ENCODE measurements at regions of chr15 and their contacts with region 1.

Region 1: DNA sequence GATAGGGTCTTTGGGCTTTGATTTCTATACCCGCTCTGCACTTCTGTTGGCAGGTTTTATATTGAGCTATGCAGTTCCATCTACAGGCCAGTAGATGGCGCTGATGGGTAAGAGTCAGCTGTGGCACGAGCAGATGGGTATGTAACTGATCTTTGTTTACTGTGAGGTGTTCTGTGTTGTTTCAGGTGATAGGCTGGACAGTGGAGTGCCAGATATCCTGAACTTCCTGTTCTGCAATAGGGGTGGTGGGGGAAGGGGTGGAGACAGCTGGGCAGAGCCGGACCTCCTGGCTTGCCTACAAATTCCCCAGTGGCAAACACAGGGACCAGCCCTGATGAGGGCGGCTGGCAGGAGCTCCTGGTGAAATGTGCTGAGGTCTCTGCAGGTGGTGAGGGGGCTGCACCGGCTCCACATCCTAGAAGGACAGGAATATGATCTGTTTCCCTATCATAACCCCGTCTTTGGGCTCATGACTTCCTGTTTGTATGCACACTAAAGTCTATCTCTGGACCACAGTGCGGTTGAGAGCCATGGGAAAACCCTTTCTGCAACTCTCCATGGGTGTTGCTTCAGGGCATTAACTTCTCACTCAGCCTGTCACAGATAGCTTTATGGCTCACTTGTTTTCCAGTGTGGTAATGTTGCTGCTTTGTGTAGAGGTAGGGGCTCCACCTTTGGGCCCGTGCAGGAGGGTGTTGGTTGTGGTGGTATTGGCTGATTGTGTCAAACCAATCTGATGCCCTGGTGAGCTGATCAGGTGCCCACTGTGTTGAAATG is 13.4 kb upstream of the FAM98B start:
- DNase-seq: peak; percentile 63
- ATAC-seq: peak; percentile 90
- H3K4me3 Mint-ChIP-seq: no peak overlapping the region
- H3K27ac Mint-ChIP-seq: peak overlapping the region; percentile 7
- H3K4me1 Mint-ChIP-seq: peaks cover 8% of the 10 kb centered on the region
- H3K27me3 Mint-ChIP-seq: peaks cover 44% of the 10 kb centered on the region

Region 2: DNA sequence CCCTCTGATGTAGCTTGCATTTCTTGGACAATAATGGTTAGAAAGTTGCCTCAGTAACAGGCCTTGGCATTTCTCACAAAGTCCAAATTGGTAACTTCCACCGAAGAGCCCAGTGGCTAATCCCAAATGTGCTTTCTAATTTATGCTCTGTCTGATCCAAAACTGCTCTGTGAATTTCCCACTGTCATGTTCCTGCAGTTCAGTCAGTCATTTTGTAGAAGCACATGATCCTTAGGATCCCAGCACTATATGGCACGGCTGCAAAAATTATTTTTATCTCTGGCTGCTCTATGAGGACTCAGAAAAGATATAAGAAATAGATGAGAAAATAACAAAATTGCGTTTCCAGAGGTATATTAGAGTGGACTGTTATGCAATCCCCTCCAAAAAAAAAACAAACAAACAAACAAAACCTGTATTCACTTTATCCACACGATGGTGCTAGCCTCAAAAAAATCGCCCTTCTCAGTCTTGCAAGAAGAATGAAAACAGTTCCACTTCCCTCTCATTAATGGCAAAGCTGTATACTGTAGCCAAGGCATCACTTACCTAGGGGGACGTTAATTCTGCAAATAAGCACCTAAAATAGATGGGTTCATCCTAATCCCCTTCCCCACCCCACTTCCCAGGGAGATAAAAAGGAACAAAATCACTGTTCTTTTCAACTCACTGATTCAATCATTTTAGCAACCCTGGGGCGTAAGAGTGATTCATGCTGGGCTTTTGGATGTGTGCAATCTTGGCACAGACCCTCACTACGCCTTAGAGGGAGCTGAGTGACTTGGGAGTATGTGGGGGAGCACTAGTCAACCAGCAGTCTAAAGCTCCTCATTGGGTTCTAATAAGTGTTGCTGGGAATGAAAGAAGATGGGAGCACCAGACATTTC is 444.8 kb before region 1 on chr15:
- CTCF ChIA-PET with region 1: no interaction called
- DNase-seq: no peak
- ATAC-seq: no peak
- H3K4me3 Mint-ChIP-seq: no peak overlapping the region
- H3K27ac Mint-ChIP-seq: no peak overlapping the region
- H3K4me1 Mint-ChIP-seq: no peaks in the 10 kb centered on the region
- H3K27me3 Mint-ChIP-seq: peaks cover 34% of the 10 kb centered on the region

Region 3: DNA sequence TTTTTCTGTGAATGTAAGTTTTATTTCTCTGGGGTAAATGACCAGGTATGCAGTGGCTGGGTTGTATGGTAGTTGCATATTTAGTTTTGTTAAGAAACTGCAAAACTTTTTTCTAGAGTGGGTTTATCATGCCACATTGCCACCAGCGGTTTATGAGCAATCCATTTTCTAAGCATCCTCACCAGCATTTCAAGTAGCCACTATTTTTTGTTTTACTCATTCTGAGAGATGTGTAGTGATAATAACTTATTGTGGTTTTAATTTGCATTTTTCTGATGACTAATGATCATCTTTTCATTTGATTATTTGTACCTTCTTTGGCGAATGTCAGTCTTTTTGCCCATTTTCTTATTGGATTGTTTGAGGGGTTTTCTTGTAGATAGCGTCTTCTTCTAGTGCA is 131.7 kb before region 1 on chr15:
- CTCF ChIA-PET with region 1: no interaction called
- DNase-seq: peak; percentile 45
- ATAC-seq: peak; percentile 42
- H3K4me3 Mint-ChIP-seq: no peak overlapping the region
- H3K27ac Mint-ChIP-seq: no peak overlapping the region
- H3K4me1 Mint-ChIP-seq: peaks cover 14% of the 10 kb centered on the region
- H3K27me3 Mint-ChIP-seq: peaks cover 79% of the 10 kb centered on the region

Region 4: GRCh38 chr15:38424101-38424552 is 16.4 kb before region 1 on chr15:
- CTCF ChIA-PET with region 1: interaction called, 20 read pairs
- DNase-seq: no peak
- ATAC-seq: peak; percentile 33
- H3K4me3 Mint-ChIP-seq: no peak overlapping the region
- H3K27ac Mint-ChIP-seq: no peak overlapping the region
- H3K4me1 Mint-ChIP-seq: peaks cover 16% of the 10 kb centered on the region
- H3K27me3 Mint-ChIP-seq: peaks cover 45% of the 10 kb centered on the region

Region 5: GRCh38 chr15:38463893-38464292 is 23.4 kb after region 1 on chr15:
- CTCF ChIA-PET with region 1: interaction called, 11 read pairs
- DNase-seq: no peak
- ATAC-seq: no peak
- H3K4me3 Mint-ChIP-seq: no peak overlapping the region
- H3K27ac Mint-ChIP-seq: no peak overlapping the region
- H3K4me1 Mint-ChIP-seq: peaks cover 28% of the 10 kb centered on the region
- H3K27me3 Mint-ChIP-seq: no peaks in the 10 kb centered on the region

Region 6: DNA sequence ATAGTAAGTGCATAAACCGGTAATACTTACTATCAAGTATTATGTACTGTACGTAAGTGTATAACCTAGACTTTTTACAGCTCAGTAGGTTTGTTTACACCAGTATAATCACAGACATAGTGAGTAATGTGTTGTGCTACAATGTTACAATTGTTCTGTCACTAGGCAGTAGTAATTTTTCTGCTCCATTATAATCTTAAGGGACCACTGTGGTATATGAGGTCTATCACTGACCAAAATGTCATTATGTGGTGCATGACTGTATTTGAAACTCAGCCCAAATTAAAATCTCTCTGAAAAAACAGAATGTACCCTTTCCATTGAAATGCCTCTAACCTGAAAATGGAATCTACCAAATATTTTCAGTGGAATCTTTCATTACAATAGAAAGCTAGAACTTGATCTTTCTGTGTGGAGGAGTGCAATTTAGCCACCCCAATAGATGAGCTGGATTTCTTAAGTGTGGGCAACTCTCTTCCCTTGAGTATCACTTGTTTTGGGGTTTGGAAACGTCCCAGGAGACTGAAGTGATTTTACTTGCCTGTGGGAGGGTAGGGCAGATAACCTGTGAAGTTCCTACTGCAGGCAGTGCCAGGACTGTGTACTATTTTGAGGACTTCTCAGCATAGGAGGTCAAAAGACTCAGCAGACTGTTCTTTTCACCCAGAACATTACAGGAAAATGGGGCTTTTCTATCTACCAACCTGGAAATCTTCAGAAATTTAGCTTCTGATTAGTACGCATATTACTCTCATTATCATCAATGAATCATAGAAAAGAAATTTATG is 64.3 kb after region 1 on chr15:
- CTCF ChIA-PET with region 1: interaction called, 10 read pairs
- DNase-seq: no peak
- ATAC-seq: no peak
- H3K4me3 Mint-ChIP-seq: no peak overlapping the region
- H3K27ac Mint-ChIP-seq: peak overlapping the region; percentile 55
- H3K4me1 Mint-ChIP-seq: peaks cover 45% of the 10 kb centered on the region
- H3K27me3 Mint-ChIP-seq: no peaks in the 10 kb centered on the region

Region 7: DNA sequence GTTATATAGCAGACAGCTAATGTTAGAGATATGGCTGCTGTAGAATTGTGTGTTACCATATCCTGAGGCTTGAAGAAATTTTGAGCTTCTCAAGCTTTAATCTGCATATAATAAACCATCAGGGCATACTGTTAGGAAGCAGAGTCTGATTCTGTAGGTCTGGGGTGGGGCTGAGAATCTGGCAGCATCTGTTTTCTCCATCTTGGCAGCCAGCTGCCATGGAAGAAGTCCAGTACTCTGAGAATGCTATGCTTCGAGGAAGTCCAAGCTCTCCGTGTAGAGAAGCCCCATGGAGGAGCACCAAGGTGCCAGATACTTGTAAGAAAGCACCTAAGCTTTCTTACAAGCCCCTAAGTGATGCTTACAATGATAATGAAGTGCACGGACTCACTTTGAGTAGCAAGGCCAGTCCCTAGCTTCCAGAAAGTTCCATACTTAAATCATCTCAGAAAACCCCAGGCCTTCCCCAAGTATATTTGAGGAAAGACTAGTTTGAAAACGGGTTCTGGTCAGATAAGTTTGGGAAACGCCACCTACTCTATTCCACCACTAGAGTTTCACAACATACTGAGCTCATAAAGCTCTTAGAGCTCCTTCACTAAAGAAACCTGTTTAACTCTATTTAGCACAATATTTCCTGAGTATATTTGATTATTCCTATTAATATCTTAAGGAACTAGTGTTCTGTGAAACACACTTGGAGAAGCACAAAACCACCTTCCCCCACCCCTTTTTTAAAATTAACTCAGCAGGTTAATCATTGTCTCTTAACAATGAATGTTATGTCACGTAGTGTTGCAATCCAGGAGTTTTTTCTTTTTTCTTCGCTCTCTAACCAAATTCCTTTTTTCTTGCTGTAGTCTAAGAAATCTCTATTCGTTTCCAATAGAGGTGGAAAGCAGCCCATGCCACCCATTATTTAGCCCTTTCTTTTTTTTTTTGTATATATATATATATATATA is 184.0 kb after region 1 on chr15:
- CTCF ChIA-PET with region 1: no interaction called
- DNase-seq: no peak
- ATAC-seq: no peak
- H3K4me3 Mint-ChIP-seq: no peak overlapping the region
- H3K27ac Mint-ChIP-seq: no peak overlapping the region
- H3K4me1 Mint-ChIP-seq: peaks cover 26% of the 10 kb centered on the region
- H3K27me3 Mint-ChIP-seq: no peaks in the 10 kb centered on the region

Region 8: DNA sequence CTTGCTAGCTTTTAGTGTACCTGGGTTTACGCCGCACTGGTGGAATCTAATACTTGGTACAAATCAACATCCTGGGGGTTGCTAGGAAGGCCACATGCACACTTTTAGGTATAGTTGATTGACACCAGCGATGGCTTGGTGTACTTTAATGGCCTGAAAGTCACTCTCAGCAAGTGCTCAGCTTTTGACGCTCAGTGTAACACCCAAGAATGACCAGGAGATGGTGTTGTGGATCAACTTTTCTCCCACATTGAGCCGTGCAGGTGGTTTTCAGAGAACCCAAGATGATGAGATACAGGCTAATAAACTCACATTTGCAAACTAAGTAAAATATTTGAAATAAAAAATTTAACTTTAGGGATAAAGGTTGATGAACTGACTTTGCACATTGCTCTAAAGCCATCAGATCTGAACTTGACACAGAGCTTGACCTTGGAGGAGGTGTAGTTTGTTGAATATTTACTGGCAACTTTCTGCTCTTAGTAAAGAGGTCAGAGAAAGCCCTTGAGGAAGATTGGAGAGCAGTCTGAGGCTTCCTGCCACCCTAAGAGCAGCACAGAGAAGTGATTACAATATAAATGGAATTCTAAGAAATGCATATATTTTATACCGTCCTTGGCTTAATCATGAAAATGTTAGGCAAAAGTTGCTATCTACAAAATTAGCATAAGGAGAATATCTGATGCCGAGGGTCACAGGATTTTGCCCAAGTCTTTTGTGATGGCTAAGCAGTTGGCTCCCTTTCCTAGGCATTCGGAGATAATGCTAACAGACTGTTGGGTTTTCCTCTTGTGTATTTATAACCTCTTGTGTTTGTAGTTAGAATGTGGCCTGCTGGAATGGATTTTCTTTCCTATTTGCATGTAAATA is 267.5 kb after region 1 on chr15:
- CTCF ChIA-PET with region 1: interaction called, 42 read pairs
- DNase-seq: peak; percentile 54
- ATAC-seq: peak; percentile 81
- H3K4me3 Mint-ChIP-seq: no peak overlapping the region
- H3K27ac Mint-ChIP-seq: no peak overlapping the region
- H3K4me1 Mint-ChIP-seq: peaks cover 27% of the 10 kb centered on the region
- H3K27me3 Mint-ChIP-seq: no peaks in the 10 kb centered on the region